ENCODE measurements at regions of chr11 and their contacts with region 1.

Region 1: DNA sequence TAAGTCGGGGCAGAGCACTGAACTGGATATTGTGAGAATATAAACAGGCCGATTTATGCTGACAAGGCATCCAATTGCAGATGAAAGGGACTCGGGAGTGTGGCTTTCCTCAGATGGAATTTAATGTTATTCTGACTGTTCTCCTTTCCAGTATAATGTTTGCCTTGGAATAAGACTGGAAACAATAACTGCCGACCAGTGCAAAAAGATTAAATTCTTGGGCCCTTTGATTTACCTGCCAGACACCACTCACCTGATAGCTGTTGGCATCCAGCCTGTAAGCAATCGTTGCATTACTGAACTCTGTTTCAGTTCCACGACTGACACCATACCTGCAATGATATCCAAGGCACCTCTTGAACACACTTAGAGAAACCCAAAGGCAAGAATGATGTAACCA is 10.9 kb downstream of the NUP160 start:
- DNase-seq: no peak
- ATAC-seq: no peak
- H3K4me3 ChIP-seq: no peak overlapping the region
- H3K27ac ChIP-seq: no peak overlapping the region
- H3K4me1 ChIP-seq: no peaks in the 10 kb centered on the region
- H3K27me3 ChIP-seq: no peaks in the 10 kb centered on the region
- CTCF ChIP-seq: no peak

Region 2: DNA sequence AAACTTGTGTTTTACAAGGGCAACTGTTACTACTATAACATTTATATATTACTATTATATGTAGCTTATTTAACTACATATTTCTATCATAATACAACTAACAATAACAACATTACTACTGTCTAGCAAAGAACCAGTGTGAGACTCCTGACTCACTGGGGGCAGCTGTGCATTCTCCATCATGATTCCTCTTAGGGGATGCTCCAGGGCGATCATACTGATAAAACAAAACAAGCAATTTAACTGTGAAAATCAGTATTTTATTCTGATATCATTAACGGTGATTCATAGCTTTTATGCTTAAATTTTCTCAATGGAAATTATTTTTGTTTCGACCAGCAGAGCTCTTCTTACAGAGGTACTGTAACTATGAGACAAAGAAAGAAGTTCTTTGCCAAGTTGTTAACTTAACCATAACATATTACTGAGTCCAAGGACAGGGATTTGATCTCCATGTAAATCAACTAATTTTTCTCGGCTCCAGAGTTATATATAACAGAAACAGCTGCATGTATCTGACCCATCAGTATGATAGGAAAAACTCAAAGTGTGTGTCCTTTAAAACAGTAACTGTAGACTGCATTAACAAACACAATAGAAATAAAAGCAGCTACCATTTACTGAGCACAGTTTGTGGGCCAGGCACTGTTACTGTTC is 45.4 kb before region 1 on chr11:
- intact Hi-C with region 1: loop called in 1 of 10 experiments (anchors 5 kb)
- DNase-seq: no peak
- ATAC-seq: peak in 2 of 8 donors; percentile 27 to 29
- H3K4me3 ChIP-seq: no peak overlapping the region
- H3K27ac ChIP-seq: peak overlapping the region in 8 of 10 donors; percentile 44 to 80 (median 66)
- H3K4me1 ChIP-seq: peaks cover 0 to 19% (median 7%) of the 10 kb centered on the region in 9 donors
- H3K27me3 ChIP-seq: no peaks in the 10 kb centered on the region
- CTCF ChIP-seq: no peak

Region 3: DNA sequence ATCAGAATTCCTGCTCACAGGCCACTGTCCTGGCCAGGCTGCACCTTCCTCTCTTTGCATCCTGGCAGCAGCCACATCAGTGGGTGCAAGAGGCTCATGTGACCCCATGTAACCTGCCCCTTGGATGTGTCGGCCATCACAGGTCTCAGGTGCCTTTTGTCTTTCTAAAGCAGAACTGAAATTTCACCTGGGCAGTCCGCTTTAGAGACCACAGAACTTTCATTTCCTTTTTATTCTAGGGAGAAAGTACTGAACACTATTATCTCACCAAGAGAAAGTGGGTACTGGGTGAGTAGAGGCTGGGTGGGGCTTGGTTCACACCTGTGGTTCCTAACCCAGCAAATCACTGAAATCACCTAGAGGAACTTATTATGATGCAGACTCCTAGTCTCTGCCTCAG is 62.5 kb after region 1 on chr11:
- intact Hi-C with region 1: no loop called
- DNase-seq: no peak
- ATAC-seq: no peak
- H3K4me3 ChIP-seq: no peak overlapping the region
- H3K27ac ChIP-seq: no peak overlapping the region
- H3K4me1 ChIP-seq: no peaks in the 10 kb centered on the region
- H3K27me3 ChIP-seq: no peaks in the 10 kb centered on the region
- CTCF ChIP-seq: no peak